CD8-positive, alpha-beta memory T cell (primary cell): ENCODE measurements at regions of chr19 and their contacts with region 1.

Region 1: GRCh38 chr19:6862673-6863078 is 24.7 kb upstream of the ADGRE1 start:
- DNase-seq: peak; percentile 82 to 94 (median 88)
- H3K4me3 ChIP-seq: no peak overlapping the region
- H3K4me3 Mint-ChIP-seq: peak overlapping the region; percentile 64 to 89 (median 88)
- H3K27ac ChIP-seq: no peak overlapping the region
- H3K27ac Mint-ChIP-seq: peak overlapping the region; percentile 73 to 97 (median 84)
- H3K4me1 ChIP-seq: peaks cover 7% of the 10 kb centered on the region
- H3K4me1 Mint-ChIP-seq: peaks cover 15 to 20% (median 19%) of the 10 kb centered on the region in 3 donors
- H3K27me3 ChIP-seq: no peaks in the 10 kb centered on the region
- H3K27me3 Mint-ChIP-seq: peaks cover 2 to 7% of the 10 kb centered on the region in 2 donors

Region 2: GRCh38 chr19:6521718-6522646 is 340.7 kb before region 1 on chr19:
- CTCF ChIA-PET with region 1: interaction called, 40 read pairs
- POLR2A ChIA-PET with region 1: no interaction called
- DNase-seq: peak; percentile 44 to 90 (median 82)
- H3K4me3 ChIP-seq: no peak overlapping the region
- H3K4me3 Mint-ChIP-seq: peak overlapping the region; percentile 17 to 61 (median 32)
- H3K27ac ChIP-seq: peak overlapping the region; percentile 60
- H3K27ac Mint-ChIP-seq: peak overlapping the region; percentile 89 to 99 (median 96)
- H3K4me1 ChIP-seq: peaks cover 25% of the 10 kb centered on the region
- H3K4me1 Mint-ChIP-seq: peaks cover 30 to 39% (median 33%) of the 10 kb centered on the region in 3 donors
- H3K27me3 ChIP-seq: no peaks in the 10 kb centered on the region
- H3K27me3 Mint-ChIP-seq: no peaks in the 10 kb centered on the region

Region 3: GRCh38 chr19:6737284-6738046 is 125.2 kb before region 1 on chr19 and contains the start of gene GPR108:
- CTCF ChIA-PET with region 1: interaction called, 87 read pairs
- POLR2A ChIA-PET with region 1: interaction called, 14 read pairs
- DNase-seq: peak; percentile 99 to 100 (median 99)
- H3K4me3 ChIP-seq: peak within 1 kb of the TSS; percentile 80
- H3K4me3 Mint-ChIP-seq: peak within 1 kb of the TSS; percentile 92 to 99 (median 96)
- H3K27ac ChIP-seq: peak within 1 kb of the TSS; percentile 77
- H3K27ac Mint-ChIP-seq: peak within 1 kb of the TSS; percentile 95 to 100 (median 98)
- H3K4me1 ChIP-seq: peaks cover 47% of the 10 kb centered on the region
- H3K4me1 Mint-ChIP-seq: peaks cover 32 to 53% (median 36%) of the 10 kb centered on the region in 3 donors
- H3K27me3 ChIP-seq: no peaks in the 10 kb centered on the region
- H3K27me3 Mint-ChIP-seq: no peaks in the 10 kb centered on the region
- total RNA-seq, gene GPR108: 72.0 to 74.0 TPM

Region 4: DNA sequence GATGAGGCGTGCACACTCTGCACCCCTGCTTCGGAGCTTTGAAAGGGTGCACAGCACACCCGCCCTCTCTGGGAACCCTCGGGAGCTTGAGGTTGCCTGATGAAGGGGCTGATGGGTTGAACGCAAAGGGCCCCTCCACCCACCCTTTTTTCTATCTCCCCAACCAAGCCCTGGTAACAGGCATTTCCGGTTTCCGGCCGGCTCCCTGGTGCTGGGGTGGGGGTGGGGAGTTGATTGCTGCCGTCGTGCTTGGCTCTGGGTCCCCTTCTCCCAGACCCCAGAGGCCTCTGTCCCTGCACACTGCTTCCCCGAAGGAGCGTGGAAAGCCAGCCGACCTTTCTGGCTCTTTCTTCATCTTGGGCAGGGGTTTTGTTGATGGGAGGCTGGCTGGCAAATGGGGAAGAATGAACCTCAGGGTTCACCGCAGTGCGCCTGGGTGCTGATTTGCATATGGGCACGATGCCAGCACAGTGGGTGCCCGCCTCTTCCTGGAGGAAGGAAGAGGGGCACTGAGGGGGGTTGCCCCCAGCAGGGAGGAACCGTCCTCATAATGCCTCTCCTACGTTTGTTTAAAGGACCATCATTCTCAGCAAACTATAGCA is 61.1 kb before region 1 on chr19:
- CTCF ChIA-PET with region 1: interaction called, 15 read pairs
- POLR2A ChIA-PET with region 1: interaction called, 6 read pairs
- DNase-seq: peak; percentile 71 to 91 (median 84)
- H3K4me3 ChIP-seq: peak overlapping the region; percentile 68
- H3K4me3 Mint-ChIP-seq: peak overlapping the region; percentile 84 to 93 (median 89)
- H3K27ac ChIP-seq: peak overlapping the region; percentile 68
- H3K27ac Mint-ChIP-seq: peak overlapping the region; percentile 94 to 99 (median 97)
- H3K4me1 ChIP-seq: peaks cover 50% of the 10 kb centered on the region
- H3K4me1 Mint-ChIP-seq: peaks cover 49 to 67% (median 63%) of the 10 kb centered on the region in 3 donors
- H3K27me3 ChIP-seq: no peaks in the 10 kb centered on the region
- H3K27me3 Mint-ChIP-seq: no peaks in the 10 kb centered on the region

Region 5: DNA sequence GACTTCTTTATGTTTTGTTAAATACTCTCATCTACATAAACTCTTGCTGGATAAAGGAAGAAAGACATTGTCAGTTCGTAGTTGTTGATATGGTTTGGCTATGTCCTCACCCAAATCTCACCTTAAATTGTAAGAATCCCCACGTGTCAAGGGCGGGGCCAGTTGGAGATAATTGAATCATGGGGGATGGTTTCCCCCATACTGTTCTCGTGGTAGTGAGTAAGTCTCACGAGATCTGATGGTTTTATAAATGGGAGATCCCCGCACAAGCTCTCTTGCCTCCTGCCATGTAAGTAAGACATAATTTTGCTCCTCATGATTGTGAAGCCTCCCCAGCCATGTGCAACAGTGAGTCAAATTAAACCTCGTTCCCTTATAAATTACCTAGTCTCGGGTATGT is 28.3 kb after region 1 on chr19:
- CTCF ChIA-PET with region 1: interaction called, 17 read pairs
- POLR2A ChIA-PET with region 1: interaction called, 13 read pairs
- DNase-seq: peak in 2 of 5 donors; percentile 11 to 44
- H3K4me3 ChIP-seq: peak overlapping the region; percentile 15
- H3K4me3 Mint-ChIP-seq: peak overlapping the region in 6 of 7 donors; percentile 33 to 77 (median 67)
- H3K27ac ChIP-seq: no peak overlapping the region
- H3K27ac Mint-ChIP-seq: peak overlapping the region in 7 of 8 donors; percentile 74 to 94 (median 81)
- H3K4me1 ChIP-seq: peaks cover 80% of the 10 kb centered on the region
- H3K4me1 Mint-ChIP-seq: peaks cover 53 to 81% (median 78%) of the 10 kb centered on the region in 3 donors
- H3K27me3 ChIP-seq: no peaks in the 10 kb centered on the region
- H3K27me3 Mint-ChIP-seq: peaks cover 3 to 11% of the 10 kb centered on the region in 2 donors

Region 6: DNA sequence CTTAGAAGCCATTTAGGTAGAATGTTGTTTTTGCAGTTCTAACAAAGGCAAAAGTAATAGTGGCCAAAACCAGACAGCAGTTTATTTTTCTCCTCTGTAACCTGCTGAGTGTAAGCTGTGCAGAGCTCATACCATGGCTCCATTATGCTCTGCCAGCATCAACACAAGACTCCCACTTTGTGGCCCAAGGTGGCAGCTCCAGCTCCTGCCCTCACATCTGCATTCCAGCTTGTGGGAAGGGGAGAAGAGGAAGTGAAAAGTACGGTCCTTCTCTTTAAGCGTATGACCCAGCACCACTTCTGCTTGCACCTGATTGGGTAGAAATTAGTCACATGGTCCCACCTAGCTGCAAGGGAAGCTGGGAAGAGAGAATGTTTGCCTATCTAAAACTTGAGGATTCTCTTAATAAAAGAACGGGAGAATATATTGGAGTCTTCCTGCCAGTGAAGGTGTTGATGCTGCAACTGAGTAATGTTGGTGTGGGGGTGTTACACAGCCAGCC is 43.9 kb after region 1 on chr19:
- CTCF ChIA-PET with region 1: no interaction called
- POLR2A ChIA-PET with region 1: no interaction called
- DNase-seq: no peak
- H3K4me3 ChIP-seq: no peak overlapping the region
- H3K4me3 Mint-ChIP-seq: no peak overlapping the region
- H3K27ac ChIP-seq: no peak overlapping the region
- H3K27ac Mint-ChIP-seq: no peak overlapping the region
- H3K4me1 ChIP-seq: no peaks in the 10 kb centered on the region
- H3K4me1 Mint-ChIP-seq: no peaks in the 10 kb centered on the region
- H3K27me3 ChIP-seq: no peaks in the 10 kb centered on the region
- H3K27me3 Mint-ChIP-seq: peaks cover 3 to 14% of the 10 kb centered on the region in 2 donors